ENCODE measurements at regions of chr7 and their contacts with region 1.

Region 1: DNA sequence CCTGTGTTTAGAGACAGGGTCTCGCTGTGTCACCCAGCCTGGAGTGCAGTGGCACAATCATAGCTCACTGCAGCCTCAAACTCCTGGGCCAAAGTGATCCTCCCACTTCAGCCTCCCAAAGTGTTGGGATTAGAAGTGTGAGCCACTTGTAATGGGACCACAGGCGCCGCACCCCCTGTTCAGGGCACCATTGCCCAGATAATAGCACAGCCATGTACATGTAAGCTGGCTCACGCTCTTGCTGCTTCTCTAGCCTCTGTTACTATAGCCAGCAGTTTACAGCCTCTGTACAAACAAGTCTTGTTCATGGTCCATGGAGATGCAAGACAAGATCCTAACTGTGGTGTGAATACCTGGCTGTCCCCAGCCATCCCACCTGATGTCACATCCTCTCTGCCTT is 4.2 kb upstream of the MLXIPL start:
- DNase-seq: no peak
- H3K4me3 ChIP-seq: no peak overlapping the region
- H3K27ac ChIP-seq: no peak overlapping the region
- H3K4me1 ChIP-seq: peaks cover 0 to 8% (median 4%) of the 10 kb centered on the region in 4 experiments
- H3K27me3 ChIP-seq: peaks cover 0 to 76% (median 28%) of the 10 kb centered on the region in 5 experiments

Region 2: GRCh38 chr7:73645643-73646174 is 17.2 kb after region 1 on chr7:
- CTCF ChIA-PET with region 1: interaction called, 20 read pairs
- POLR2A ChIA-PET with region 1: no interaction called
- DNase-seq: peak in 2 of 3 donors; percentile 26 to 29
- H3K4me3 ChIP-seq: no peak overlapping the region
- H3K27ac ChIP-seq: no peak overlapping the region
- H3K4me1 ChIP-seq: peaks cover 0 to 13% (median 9%) of the 10 kb centered on the region in 4 experiments
- H3K27me3 ChIP-seq: peaks cover 8 to 93% (median 17%) of the 10 kb centered on the region in 5 experiments

Region 3: GRCh38 chr7:73667344-73668102 is 39.0 kb after region 1 on chr7 and contains the start of gene VPS37D:
- CTCF ChIA-PET with region 1: interaction called, 10 read pairs
- POLR2A ChIA-PET with region 1: no interaction called
- DNase-seq: peak; percentile 84 to 89 (median 88)
- H3K4me3 ChIP-seq: peak within 1 kb of the TSS in 6 of 7 experiments; percentile 10 to 59 (median 48)
- H3K27ac ChIP-seq: no peak within 1 kb of the TSS
- H3K4me1 ChIP-seq: peaks cover 0 to 10% (median 5%) of the 10 kb centered on the region in 4 experiments
- H3K27me3 ChIP-seq: peaks cover 0 to 90% (median 18%) of the 10 kb centered on the region in 5 experiments

Region 4: DNA sequence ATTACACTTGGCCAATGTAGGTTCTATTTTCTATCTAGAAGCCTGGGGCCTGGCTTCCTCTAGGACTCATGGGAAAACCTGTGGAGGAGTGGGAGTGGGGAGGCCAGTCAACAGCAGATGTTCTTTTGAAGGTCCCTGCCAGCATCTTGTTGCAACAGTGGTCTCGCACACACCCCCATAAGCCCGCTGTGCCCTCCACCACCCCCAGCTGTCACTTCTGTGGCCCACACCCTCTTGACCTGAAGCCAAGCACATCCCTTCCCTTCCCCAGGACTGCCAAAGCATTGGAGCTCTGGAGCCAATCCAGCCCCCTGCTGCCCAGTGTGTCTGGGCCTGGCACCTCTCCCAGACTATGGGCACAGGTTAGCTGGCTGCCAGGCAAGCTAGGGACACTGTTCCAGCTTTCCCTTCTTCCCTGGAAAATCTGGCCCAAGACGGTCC is 92.9 kb after region 1 on chr7:
- CTCF ChIA-PET with region 1: interaction called, 18 read pairs
- POLR2A ChIA-PET with region 1: no interaction called
- DNase-seq: no peak
- H3K4me3 ChIP-seq: no peak overlapping the region
- H3K27ac ChIP-seq: no peak overlapping the region
- H3K4me1 ChIP-seq: peaks cover 0 to 34% (median 32%) of the 10 kb centered on the region in 4 experiments
- H3K27me3 ChIP-seq: peaks cover 0 to 85% (median 33%) of the 10 kb centered on the region in 5 experiments

Measured in common myeloid progenitor, CD34-positive (primary cell).